Thyroid gland (tissue), 4 donors: ENCODE measurements at regions of chr6 and their contacts with region 1.

Region 1: GRCh38 chr6:149028767-149029405 is 282.1 kb downstream of the UST start:
- DNase-seq: peak; percentile 44 to 66
- H3K4me3 ChIP-seq: no peak overlapping the region
- H3K27ac ChIP-seq: no peak overlapping the region
- H3K4me1 ChIP-seq: peaks cover 25 to 29% of the 10 kb centered on the region in 2 donors
- H3K27me3 ChIP-seq: no peaks in the 10 kb centered on the region
- CTCF ChIP-seq: peak; percentile 39 to 91 (median 66)
- POLR2A ChIP-seq: no peak

Region 2: DNA sequence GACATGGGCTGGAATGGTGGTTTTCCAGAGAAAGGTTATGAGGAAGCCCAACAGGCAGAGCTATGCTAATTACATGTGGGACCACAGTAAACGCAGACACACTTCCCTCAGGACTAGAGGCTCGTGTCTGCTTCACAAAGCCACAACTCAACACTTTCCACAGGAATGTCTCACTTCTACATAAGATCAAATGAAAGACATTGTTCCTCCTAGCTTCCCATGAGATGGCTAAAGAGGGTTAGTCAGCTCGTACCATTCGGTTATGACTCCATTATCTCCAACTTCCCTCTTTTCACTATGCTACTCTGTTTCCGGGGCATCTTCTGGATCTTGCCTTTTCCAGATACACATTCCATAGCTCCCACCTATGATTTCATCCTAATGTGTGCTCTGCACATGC is 485.0 kb after region 1 on chr6:
- intact Hi-C with region 1: loop called (anchors 10 kb)
- DNase-seq: no peak
- H3K4me3 ChIP-seq: no peak overlapping the region
- H3K27ac ChIP-seq: no peak overlapping the region
- H3K4me1 ChIP-seq: no peaks in the 10 kb centered on the region
- H3K27me3 ChIP-seq: no peaks in the 10 kb centered on the region
- CTCF ChIP-seq: no peak
- POLR2A ChIP-seq: no peak